MCF 10A (cell line): ENCODE measurements at regions of chr9 and their contacts with region 1.

Region 1: GRCh38 chr9:72526901-72527800 is 5.7 kb downstream of the TMC1 start:
- DNase-seq: peak; percentile 82
- H3K4me3 Mint-ChIP-seq: peak overlapping the region; percentile 65
- H3K27ac Mint-ChIP-seq: peak overlapping the region; percentile 96
- H3K4me1 Mint-ChIP-seq: peaks cover 16% of the 10 kb centered on the region
- H3K27me3 Mint-ChIP-seq: no peaks in the 10 kb centered on the region
- CTCF ChIP-seq: no peak

Region 2: DNA sequence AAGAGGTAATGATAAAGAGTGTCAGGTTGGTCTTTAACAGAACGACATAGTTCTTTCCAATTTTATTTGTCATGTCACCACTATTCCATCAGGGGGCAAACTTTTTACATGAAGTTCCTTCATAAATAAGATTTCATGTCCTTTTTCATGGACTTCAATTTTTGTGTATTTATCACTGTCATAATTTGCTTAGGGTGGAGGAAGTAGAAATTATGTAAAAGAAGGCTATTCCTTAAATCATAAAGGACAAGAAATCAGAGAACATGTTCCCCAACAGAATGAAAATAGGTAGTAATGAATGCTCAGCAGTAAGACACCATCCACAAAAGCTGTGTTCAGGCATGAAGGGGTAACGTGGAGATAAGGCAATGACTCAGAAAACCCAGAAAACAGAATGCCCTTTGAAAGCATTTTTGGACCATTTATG is 234.9 kb before region 1 on chr9:
- CTCF ChIA-PET with region 1: interaction called, 3 read pairs
- POLR2A ChIA-PET with region 1: interaction called, 4 read pairs
- intact Hi-C with region 1: loop called (anchors 1 kb)
- DNase-seq: peak; percentile 48
- H3K4me3 Mint-ChIP-seq: no peak overlapping the region
- H3K27ac Mint-ChIP-seq: peak overlapping the region; percentile 75
- H3K4me1 Mint-ChIP-seq: peaks cover 22% of the 10 kb centered on the region
- H3K27me3 Mint-ChIP-seq: no peaks in the 10 kb centered on the region
- CTCF ChIP-seq: peak; percentile 58

Region 3: DNA sequence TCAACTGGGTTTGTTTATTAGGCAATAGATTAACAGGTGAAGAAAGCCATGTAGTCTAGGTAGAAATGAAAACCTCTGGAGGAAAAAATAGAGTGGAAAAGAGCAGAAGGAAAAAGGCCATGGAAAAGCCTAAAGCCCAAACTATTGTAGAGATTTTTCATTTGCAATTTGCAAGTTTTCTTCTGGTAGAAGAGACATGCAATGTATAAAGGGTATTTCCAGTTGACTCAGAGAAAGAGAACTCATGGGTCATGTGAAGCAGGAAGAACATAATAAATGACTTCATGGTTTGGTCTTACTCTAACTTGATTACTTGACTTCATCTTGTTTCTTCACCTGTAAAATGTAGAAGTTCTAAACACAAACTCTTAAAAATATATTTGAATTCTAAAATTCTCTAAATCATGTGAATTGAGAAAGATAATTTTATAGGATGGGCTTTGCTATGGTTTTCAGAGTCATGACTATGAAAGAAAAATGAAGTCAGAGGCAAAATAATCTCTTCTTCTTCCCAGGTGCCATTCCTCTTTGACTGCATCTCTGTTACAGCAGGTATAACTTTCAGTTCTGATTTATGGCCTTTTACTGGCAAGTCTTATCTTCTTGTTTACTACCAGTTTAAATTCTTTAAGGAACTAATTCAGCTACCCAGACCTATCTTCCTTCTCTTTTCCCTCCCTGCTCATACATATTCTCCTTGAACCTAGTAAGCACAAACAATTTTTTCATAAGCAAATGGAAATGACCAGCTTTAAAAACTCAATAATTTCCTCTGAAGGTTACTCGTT is 53.5 kb before region 1 on chr9:
- CTCF ChIA-PET with region 1: interaction called, 4 read pairs
- POLR2A ChIA-PET with region 1: interaction called, 35 read pairs
- intact Hi-C with region 1: no loop called
- DNase-seq: no peak
- H3K4me3 Mint-ChIP-seq: no peak overlapping the region
- H3K27ac Mint-ChIP-seq: no peak overlapping the region
- H3K4me1 Mint-ChIP-seq: peaks cover 20% of the 10 kb centered on the region
- H3K27me3 Mint-ChIP-seq: no peaks in the 10 kb centered on the region
- CTCF ChIP-seq: no peak

Region 4: DNA sequence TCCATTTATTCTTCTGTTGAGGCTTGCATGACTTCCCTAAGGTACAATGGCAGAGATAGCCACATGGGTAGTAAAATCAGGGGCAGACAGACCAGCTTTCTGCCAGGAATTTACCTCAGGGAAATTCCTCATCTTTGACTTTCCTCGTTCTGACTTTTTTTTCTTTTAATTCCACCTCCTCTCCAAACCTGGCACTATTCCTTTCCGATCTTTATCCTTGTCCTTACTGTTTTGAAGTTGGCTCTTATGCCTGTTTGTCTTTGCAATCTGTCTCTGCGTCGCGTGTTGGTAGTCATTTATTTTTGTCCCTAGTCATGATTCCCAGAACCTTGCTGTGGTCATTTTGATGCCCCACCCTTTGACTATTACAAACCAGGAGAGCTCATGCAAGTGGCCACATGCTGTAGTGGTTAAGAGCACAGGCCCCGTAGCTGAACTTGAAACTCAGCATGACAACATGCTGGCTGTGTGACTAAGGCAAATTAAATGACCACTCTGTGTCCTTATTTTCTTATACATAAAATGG is 13.3 kb after region 1 on chr9:
- CTCF ChIA-PET with region 1: interaction called, 3 read pairs
- POLR2A ChIA-PET with region 1: interaction called, 47 read pairs
- intact Hi-C with region 1: no loop called
- DNase-seq: peak; percentile 87
- H3K4me3 Mint-ChIP-seq: peak overlapping the region; percentile 4
- H3K27ac Mint-ChIP-seq: peak overlapping the region; percentile 59
- H3K4me1 Mint-ChIP-seq: peaks cover 39% of the 10 kb centered on the region
- H3K27me3 Mint-ChIP-seq: no peaks in the 10 kb centered on the region
- CTCF ChIP-seq: no peak

Region 5: GRCh38 chr9:72577212-72577753 is 50.1 kb after region 1 on chr9:
- CTCF ChIA-PET with region 1: interaction called, 5 read pairs
- POLR2A ChIA-PET with region 1: interaction called, 46 read pairs
- intact Hi-C with region 1: loop called (anchors 5 kb)
- DNase-seq: peak; percentile 95
- H3K4me3 Mint-ChIP-seq: peak overlapping the region; percentile 15
- H3K27ac Mint-ChIP-seq: peak overlapping the region; percentile 53
- H3K4me1 Mint-ChIP-seq: peaks cover 36% of the 10 kb centered on the region
- H3K27me3 Mint-ChIP-seq: no peaks in the 10 kb centered on the region
- CTCF ChIP-seq: no peak

Region 6: DNA sequence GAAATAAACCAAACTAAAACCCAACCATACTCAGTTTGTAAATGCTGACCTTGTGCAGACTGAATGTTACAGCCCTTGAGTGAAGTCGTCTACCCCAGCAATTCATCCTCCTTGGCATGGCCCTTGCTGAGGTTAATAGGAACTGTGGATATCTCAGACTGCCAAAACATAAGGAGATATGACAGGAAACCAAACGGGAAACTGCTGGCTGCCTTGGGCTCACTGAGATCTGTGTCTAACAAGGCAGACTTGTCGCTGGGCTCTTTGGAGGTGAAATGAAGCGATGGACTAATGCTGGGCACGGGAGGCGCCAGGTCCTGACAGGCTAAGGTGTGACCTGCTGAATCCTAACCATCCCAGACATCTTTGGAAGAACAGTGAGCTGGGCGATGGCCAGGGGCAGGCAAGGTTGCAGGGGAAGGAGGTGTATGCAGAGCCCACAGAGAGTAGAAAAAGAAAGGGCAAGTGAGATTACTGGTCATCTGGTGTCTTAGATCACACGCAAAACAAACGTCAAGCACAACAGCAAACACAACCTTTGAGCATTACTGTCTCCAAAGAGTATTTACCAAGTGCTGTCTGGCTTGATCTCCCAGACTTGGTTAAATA is 470.3 kb after region 1 on chr9:
- CTCF ChIA-PET with region 1: no interaction called
- POLR2A ChIA-PET with region 1: no interaction called
- intact Hi-C with region 1: no loop called
- DNase-seq: no peak
- H3K4me3 Mint-ChIP-seq: no peak overlapping the region
- H3K27ac Mint-ChIP-seq: no peak overlapping the region
- H3K4me1 Mint-ChIP-seq: no peaks in the 10 kb centered on the region
- H3K27me3 Mint-ChIP-seq: peaks cover 33% of the 10 kb centered on the region
- CTCF ChIP-seq: no peak